ENCODE measurements at regions of chr4 and their contacts with region 1.

Region 1: DNA sequence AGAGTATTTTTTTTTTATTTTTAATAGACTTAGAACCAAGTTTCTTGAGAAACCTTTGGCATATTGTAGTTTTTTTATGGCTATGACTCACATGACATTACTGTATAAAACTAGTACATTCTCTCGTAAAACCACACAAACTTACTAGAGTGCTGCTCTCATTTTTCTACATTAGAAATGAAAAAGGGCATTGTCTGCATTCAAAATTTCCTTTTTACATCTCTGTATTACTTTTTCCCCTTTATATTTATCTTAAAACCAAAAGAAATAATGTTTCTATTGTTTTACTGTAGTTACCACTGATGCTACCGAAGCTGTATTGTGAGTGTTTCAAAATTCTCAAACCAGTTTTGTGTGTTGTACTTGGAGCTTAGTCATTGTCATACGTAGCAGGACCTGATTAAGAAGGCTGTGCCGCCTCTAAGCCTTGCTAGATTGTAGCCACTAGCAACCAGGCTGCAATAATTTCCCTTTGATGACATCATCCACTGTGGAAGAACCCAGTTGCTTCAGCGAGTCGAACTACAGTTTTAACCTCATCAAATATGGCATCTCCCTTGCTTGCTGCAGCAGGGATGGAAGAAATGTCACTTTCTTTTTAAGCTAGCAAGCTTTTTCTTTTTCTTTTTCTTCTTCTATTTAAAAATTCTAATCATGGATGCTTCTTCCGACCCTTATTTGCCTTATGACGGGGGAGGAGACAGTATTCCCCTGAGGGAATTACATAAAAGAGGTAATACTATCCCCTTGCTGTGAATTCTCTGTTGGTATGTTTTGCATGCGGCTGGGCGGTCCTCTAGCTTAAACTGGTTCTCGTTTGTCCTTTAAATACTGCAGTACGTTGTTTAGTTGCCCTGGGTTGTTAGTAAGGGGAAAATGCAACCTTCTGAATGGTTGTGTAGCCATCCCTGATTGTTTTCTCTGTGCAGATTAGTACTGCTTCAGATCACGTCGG is 39.6 kb downstream of the CLCN3 start:
- H3K4me3 ChIP-seq: peak overlapping the region; percentile 51
- H3K27ac ChIP-seq: peak overlapping the region; percentile 67
- H3K4me1 ChIP-seq: peaks cover 27% of the 10 kb centered on the region
- CTCF ChIP-seq: no peak

Region 2: DNA sequence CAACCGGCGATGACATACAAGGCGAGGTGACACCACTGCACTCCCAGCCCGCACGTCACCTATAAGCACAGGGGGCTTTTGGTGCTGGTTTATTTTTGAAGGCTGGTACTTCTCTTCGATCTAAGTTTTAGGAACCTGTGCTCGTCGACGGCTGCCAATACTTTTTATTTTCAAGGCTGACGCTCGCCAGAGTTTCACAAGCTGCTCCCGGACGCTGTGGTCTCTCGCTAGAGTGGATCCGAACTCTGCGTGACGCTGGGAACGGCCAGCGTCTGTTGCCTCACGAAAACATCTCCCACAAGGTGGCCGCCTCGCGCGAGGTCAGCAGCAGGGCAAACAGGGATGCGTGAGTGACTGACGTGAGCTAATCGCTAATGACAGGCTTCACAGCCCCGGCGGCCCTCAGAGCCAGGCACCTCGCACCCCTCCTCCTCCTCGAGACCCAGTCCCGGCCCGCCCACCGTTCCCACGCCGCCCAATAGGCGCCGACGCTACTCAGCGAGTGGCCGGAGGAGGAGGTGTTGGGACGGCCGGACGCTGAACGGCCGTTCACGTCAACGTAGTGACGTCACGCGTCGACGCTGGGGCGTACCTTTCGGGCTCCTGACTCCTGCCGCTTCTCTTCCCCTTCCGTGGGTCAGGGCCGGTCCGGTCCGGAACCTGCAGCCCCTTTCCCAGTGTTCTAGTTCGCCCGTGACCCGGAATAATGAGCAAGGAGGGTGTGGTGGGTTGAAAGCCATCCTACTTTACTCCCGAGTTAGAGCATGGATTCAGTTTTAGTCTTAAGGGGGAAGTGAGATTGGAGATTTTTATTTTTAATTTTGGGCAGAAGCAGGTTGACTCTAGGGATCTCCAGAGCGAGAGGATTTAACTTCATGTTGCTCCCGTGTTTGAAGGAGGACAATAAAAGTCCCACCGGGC is 39.8 kb before region 1 on chr4 and contains the start of gene CLCN3:
- CTCF ChIA-PET with region 1: interaction called, 5 read pairs
- POLR2A ChIA-PET with region 1: interaction called, 11 read pairs
- H3K4me3 ChIP-seq: peak within 1 kb of the TSS; percentile 63
- H3K27ac ChIP-seq: peak within 1 kb of the TSS; percentile 50
- H3K4me1 ChIP-seq: no peaks in the 10 kb centered on the region
- CTCF ChIP-seq: peak; percentile 59

Measured in HEK293 (cell line).